ENCODE measurements at regions of chr9 and their contacts with region 1.

Region 1: GRCh38 chr9:35277628-35278359 is 116.0 kb downstream of the UNC13B start:
- DNase-seq: peak; percentile 83
- H3K4me3 ChIP-seq: no peak overlapping the region
- H3K27ac ChIP-seq: peak overlapping the region; percentile 79
- H3K4me1 ChIP-seq: peaks cover 36% of the 10 kb centered on the region
- H3K27me3 ChIP-seq: no peaks in the 10 kb centered on the region
- CTCF ChIP-seq: no peak
- POLR2A ChIP-seq: no peak

Region 2: GRCh38 chr9:35161713-35162604 is 115.8 kb before region 1 on chr9 and contains the start of gene UNC13B:
- CTCF ChIA-PET with region 1: no interaction called
- POLR2A ChIA-PET with region 1: interaction called, 9 read pairs
- dilution Hi-C with region 1: no loop called
- intact Hi-C with region 1: loop called (anchors 5 kb)
- DNase-seq: peak; percentile 96
- H3K4me3 ChIP-seq: peak within 1 kb of the TSS; percentile 86 to 95 (median 94)
- H3K27ac ChIP-seq: peak within 1 kb of the TSS; percentile 70
- H3K4me1 ChIP-seq: peaks cover 34% of the 10 kb centered on the region
- H3K27me3 ChIP-seq: no peaks in the 10 kb centered on the region
- CTCF ChIP-seq: no peak
- POLR2A ChIP-seq: peak; percentile 96
- total RNA-seq, gene UNC13B: 44.2 and 46.2 TPM in 2 replicates

Region 3: DNA sequence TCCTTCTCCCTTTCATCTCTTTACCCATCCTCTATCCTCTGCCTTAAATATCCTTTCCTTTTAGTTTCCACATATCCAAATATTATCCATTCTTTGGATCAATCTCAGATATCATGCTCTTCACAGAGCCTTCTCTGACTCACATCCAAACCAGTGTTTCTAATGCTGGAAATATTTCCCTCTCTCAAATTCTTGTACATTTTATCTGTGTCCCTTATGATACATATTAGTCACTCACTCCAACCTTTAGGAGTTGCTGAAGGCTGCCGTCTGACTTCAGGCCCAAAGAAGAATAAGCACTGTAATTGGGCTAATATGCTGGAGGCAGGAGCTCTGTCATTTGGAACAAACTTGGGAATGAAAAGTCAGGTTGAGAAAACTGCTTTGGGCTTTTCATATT is 55.8 kb after region 1 on chr9:
- CTCF ChIA-PET with region 1: no interaction called
- POLR2A ChIA-PET with region 1: no interaction called
- dilution Hi-C with region 1: no loop called
- intact Hi-C with region 1: loop called (anchors 1 kb)
- DNase-seq: peak; percentile 59
- H3K4me3 ChIP-seq: no peak overlapping the region
- H3K27ac ChIP-seq: peak overlapping the region; percentile 93
- H3K4me1 ChIP-seq: peaks cover 37% of the 10 kb centered on the region
- H3K27me3 ChIP-seq: no peaks in the 10 kb centered on the region
- CTCF ChIP-seq: no peak
- POLR2A ChIP-seq: no peak

Region 4: DNA sequence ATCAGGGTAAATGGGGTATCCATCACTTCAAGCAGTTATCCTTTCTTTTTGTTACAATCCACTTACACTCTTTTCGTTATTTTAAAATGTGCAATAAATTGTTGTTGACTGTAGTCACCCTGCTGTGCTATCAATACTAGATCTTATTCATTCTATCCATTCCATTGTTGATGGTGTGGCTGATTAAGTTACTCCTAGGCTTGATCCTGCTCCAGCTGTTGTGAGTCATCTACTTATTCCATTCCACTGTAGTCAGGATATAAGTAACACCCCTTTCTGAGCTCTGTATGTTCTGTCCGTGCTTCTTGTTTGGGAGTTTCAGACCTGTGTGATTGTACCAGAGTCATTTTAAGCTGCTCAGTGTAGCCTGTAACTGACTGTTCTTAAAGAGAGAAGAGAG is 89.7 kb after region 1 on chr9:
- CTCF ChIA-PET with region 1: no interaction called
- POLR2A ChIA-PET with region 1: no interaction called
- dilution Hi-C with region 1: no loop called
- intact Hi-C with region 1: loop called (anchors 10 kb)
- DNase-seq: peak; percentile 91
- H3K4me3 ChIP-seq: no peak overlapping the region
- H3K27ac ChIP-seq: peak overlapping the region; percentile 64
- H3K4me1 ChIP-seq: peaks cover 31% of the 10 kb centered on the region
- H3K27me3 ChIP-seq: no peaks in the 10 kb centered on the region
- CTCF ChIP-seq: no peak
- POLR2A ChIP-seq: no peak

Region 5: DNA sequence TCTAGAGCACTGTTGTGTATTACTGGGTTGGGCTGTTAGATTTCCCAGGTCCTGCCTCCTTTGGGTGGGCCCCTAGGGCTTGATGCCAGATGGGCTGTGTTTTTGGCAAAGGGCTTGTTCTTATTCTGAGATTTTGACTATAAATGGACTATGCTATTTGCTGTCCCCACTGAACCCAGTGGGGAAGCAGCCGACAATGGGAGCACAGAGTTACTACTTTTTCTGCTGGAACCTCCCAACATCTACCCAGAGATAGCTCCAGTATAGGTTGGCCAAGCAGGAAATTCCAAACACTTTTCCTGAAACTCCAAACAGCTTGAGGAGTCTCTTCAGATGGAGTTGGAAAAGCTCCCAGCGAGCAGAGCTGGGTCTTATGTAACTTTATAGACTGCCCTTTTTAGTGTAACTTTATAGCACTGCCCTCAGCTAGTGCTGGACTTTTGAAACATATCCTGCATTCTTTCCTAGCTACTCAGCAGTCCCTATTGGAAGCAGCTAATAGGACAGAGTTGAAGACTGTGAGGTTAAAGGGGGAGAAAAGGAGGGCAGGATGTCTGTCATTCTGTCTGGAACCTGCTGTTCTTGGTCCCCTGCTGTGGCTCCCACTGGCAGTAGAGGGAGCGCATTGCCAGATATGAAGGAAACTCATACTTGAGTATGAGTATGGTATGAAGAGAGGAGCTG is 233.1 kb after region 1 on chr9:
- CTCF ChIA-PET with region 1: no interaction called
- POLR2A ChIA-PET with region 1: no interaction called
- dilution Hi-C with region 1: no loop called
- intact Hi-C with region 1: loop called (anchors 1 kb)
- DNase-seq: peak; percentile 88
- H3K4me3 ChIP-seq: peak overlapping the region in 1 of 3 experiments; percentile 1
- H3K27ac ChIP-seq: peak overlapping the region; percentile 67
- H3K4me1 ChIP-seq: peaks cover 36% of the 10 kb centered on the region
- H3K27me3 ChIP-seq: no peaks in the 10 kb centered on the region
- CTCF ChIP-seq: peak; percentile 24 to 38
- POLR2A ChIP-seq: no peak

Region 6: GRCh38 chr9:35563791-35564197 is 286.0 kb after region 1 on chr9:
- CTCF ChIA-PET with region 1: no interaction called
- POLR2A ChIA-PET with region 1: no interaction called
- dilution Hi-C with region 1: no loop called
- intact Hi-C with region 1: loop called (anchors 10 kb)
- DNase-seq: peak; percentile 40
- H3K4me3 ChIP-seq: no peak overlapping the region
- H3K27ac ChIP-seq: no peak overlapping the region
- H3K4me1 ChIP-seq: peaks cover 9% of the 10 kb centered on the region
- H3K27me3 ChIP-seq: no peaks in the 10 kb centered on the region
- CTCF ChIP-seq: no peak
- POLR2A ChIP-seq: no peak

Measured in endothelial cell of umbilical vein (primary cell).